B cell (primary cell): ENCODE measurements at regions of chr19 and their contacts with region 1.

Region 1: DNA sequence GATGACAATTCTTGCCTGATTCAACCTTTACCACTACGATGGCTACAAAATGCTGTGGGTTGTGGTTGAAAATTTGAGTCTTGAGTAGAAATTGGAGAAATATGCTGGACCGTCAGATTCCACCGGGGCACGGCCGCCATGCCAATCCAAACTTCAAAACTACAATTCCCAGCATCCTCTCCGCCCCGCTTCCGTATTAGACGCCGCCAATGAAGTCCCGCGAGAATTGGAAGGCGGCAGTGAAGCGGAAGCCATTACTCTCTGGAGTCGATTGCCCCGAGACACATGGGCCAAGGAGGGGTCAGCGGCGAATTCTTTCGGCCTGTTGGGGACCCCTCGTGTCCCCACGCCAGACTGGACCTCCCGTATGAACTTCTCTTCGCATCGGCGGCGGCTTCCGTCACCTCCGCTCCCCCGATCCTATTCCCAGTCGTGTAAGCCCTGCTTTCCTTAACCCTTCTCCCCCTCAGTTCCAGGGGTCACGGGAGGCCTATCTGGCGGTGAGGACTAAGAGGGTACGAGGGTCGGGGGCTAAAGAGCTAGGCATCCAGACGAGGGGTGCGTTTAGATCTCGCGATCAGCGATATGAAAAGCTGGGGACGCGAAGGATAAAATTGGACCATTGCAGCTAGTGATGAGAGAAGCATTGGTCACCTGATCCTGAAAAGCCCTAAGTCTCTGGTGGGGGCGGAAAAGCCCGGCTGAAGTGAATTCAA is at the start of gene ZNF317:
- DNase-seq: peak; percentile 94
- ATAC-seq: peak; percentile 90
- H3K4me3 ChIP-seq: peak within 1 kb of the TSS; percentile 70 to 99 (median 97)
- H3K4me3 Mint-ChIP-seq: peak within 1 kb of the TSS; percentile 98
- H3K27ac ChIP-seq: peak within 1 kb of the TSS; percentile 86 to 90
- H3K27ac Mint-ChIP-seq: peak within 1 kb of the TSS; percentile 97
- H3K4me1 ChIP-seq: peaks cover 13 to 15% of the 10 kb centered on the region in 2 donors
- H3K4me1 Mint-ChIP-seq: peaks cover 33% of the 10 kb centered on the region
- H3K27me3 ChIP-seq: no peaks in the 10 kb centered on the region
- H3K27me3 Mint-ChIP-seq: peaks cover 2% of the 10 kb centered on the region
- CTCF ChIP-seq: no peak
- total RNA-seq, gene ZNF317: 60.6 and 65.2 TPM in 2 replicates

Region 2: GRCh38 chr19:9205501-9206113 is 65.3 kb after region 1 on chr19:
- CTCF ChIA-PET with region 1: interaction called, 11 read pairs
- POLR2A ChIA-PET with region 1: no interaction called
- intact Hi-C with region 1: loop called (anchors 1 kb)
- DNase-seq: peak; percentile 73
- ATAC-seq: peak; percentile 57
- H3K4me3 ChIP-seq: peak overlapping the region in 4 of 5 experiments; percentile 21 to 42 (median 33)
- H3K4me3 Mint-ChIP-seq: peak overlapping the region; percentile 78
- H3K27ac ChIP-seq: no peak overlapping the region
- H3K27ac Mint-ChIP-seq: no peak overlapping the region
- H3K4me1 ChIP-seq: peaks cover 0 to 4% of the 10 kb centered on the region in 2 donors
- H3K4me1 Mint-ChIP-seq: peaks cover 6% of the 10 kb centered on the region
- H3K27me3 ChIP-seq: no peaks in the 10 kb centered on the region
- H3K27me3 Mint-ChIP-seq: peaks cover 4% of the 10 kb centered on the region
- CTCF ChIP-seq: peak; percentile 97